ENCODE measurements at regions of chrX and their contacts with region 1.

Region 1: GRCh38 chrX:107205770-107206696 is at the starts of genes DNAAF6 and NUP62CL:
- DNase-seq: peak; percentile 28
- ATAC-seq: peak; percentile 98
- H3K4me3 ChIP-seq: peak within 1 kb of the TSS; percentile 67
- H3K27ac ChIP-seq: no peak within 1 kb of the TSS; the same call in 1 of the 2 replicates
- H3K4me1 ChIP-seq: no peaks in the 10 kb centered on the region
- H3K27me3 ChIP-seq: no peaks in the 10 kb centered on the region
- CTCF ChIP-seq: no peak
- EP300 ChIP-seq: no peak
- POLR2A ChIP-seq: peak; percentile 54; the same call in 1 of the 2 replicates
- RAD21 ChIP-seq: no peak
- polyA plus RNA-seq, gene DNAAF6: not detected
- polyA plus RNA-seq, gene NUP62CL: 2.5 to 4.6 TPM

Region 2: GRCh38 chrX:107118322-107119147 is 87.5 kb before region 1 on chrX and contains the start of gene RBM41:
- CTCF ChIA-PET with region 1: no interaction called
- POLR2A ChIA-PET with region 1: no interaction called
- RAD21 ChIA-PET with region 1: no interaction called
- SMC1A ChIA-PET with region 1: no interaction called
- in situ Hi-C with region 1: no loop called
- intact Hi-C with region 1: loop called (anchors 5 kb)
- DNase-seq: peak; percentile 31
- ATAC-seq: peak; percentile 100
- H3K4me3 ChIP-seq: peak within 1 kb of the TSS; percentile 55
- H3K27ac ChIP-seq: peak within 1 kb of the TSS; percentile 83
- H3K4me1 ChIP-seq: no peaks in the 10 kb centered on the region
- H3K27me3 ChIP-seq: no peaks in the 10 kb centered on the region
- CTCF ChIP-seq: no peak
- EP300 ChIP-seq: no peak
- POLR2A ChIP-seq: no peak; the same call in 1 of the 2 replicates
- RAD21 ChIP-seq: no peak
- polyA plus RNA-seq, gene RBM41: 7.7 to 9.1 TPM